Mammary epithelial cell (primary cell): ENCODE measurements at regions of chr12 and their contacts with region 1.

Region 1: DNA sequence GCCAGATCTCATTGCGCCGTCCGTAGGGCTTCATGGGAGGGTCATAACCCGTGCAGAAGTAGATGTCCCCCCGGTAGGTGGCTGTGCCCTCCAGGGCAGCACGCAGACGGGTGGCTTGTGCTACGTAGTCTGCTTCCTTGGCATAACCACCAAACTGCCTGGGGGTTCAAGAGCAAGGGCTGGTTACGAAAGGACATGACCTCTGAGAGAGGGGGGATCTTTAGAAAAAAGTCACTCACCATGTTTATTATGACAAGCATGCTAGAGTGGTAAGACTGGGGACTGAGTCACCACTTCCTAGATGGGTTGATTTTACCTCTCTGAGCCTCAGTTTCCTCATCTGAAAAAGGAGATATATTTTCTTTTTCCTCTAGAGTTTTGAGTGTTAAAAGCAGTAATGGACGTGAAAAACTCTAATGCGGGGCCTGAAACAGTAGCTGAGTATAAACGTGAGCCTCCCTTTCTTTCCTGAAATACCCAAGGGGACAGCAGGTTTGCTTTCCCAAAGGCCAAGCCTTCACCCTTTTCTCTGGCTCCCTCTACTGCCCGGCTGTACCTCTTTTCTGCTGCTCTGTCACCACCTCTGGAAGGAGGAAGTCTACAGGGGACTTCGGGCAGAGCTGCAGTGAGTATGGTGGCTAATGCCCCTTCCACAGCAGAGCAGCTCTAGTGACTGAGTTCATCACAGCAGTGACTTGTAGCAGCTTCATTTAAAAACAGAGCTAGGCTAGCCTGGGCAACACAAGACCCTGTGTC is 23.5 kb upstream of the GPRC5D start:
- DNase-seq: peak; percentile 27
- H3K4me3 ChIP-seq: no peak overlapping the region
- H3K27ac ChIP-seq: peak overlapping the region; percentile 41
- H3K4me1 ChIP-seq: peaks cover 24% of the 10 kb centered on the region
- H3K27me3 ChIP-seq: no peaks in the 10 kb centered on the region
- CTCF ChIP-seq: peak; percentile 38 to 61

Region 2: DNA sequence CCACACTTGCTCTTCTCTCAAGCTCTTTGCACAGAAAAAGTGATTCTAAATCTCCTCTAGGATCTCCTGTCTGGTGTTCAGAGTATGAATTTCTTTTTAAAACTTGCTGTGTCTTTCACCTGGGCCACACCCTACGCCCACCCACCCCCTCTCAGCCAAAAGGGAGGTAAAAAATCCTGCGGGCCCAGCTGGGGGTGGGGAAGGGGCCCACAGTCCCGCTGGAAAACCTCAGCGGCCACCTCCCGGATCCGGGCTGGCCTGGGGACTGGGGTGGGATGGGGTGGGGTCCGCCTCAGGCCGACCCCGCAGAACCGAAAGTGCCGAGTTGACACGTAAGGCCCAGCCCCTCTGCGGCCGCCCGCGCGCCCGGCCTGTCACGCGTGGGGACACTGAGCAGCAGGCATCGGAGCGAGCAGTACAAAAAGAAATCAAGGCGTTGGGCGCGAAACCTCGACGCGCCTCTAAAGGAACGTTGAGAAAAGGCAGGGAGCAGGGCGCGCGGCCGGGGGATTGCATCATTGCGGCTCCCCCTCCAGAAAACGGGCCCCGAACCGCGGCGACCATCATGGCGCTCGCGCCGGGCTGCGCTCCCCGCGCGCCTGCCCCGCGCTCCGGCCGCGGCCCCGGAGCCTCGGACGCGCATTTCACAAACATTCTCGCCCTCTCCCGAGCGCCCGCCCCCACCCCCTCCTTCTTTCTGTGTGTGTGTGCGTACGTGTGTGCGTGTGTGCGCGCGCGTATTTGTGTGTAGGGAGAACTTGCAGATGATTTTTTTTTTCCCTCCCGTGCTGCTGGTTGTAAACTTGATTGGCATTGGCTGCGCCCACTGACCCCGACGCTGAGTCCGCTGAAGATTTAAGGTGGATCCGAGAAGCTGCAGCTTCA is 250.6 kb before region 1 on chr12:
- CTCF ChIA-PET with region 1: no interaction called
- dilution Hi-C with region 1: no loop called
- in situ Hi-C with region 1: no loop called
- intact Hi-C with region 1: loop called (anchors 5 kb)
- DNase-seq: peak; percentile 97
- H3K4me3 ChIP-seq: peak overlapping the region; percentile 86 to 95 (median 93)
- H3K27ac ChIP-seq: peak overlapping the region; percentile 94
- H3K4me1 ChIP-seq: peaks cover 34% of the 10 kb centered on the region
- H3K27me3 ChIP-seq: no peaks in the 10 kb centered on the region
- CTCF ChIP-seq: no peak

Region 3: DNA sequence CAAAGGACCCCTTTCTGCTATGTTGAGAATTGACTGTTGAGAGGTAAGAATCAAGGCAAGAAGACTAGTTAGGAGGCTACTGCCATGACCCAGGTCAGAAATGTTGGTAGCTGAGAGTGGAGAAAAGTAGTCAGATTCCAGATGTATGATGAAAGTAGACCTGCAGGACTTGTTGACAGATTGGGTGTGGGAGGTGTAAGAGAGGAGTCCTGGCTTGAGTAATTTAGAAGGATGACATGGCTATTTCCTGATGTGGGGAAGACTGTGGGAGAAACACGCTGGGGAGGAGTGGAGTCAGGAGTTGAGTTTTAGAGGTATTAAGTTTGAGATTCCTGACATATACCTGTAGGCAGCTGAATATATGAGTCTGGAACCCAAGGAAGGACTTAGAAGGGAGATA is 175.1 kb before region 1 on chr12:
- CTCF ChIA-PET with region 1: no interaction called
- dilution Hi-C with region 1: no loop called
- in situ Hi-C with region 1: no loop called
- intact Hi-C with region 1: no loop called
- DNase-seq: peak; percentile 83
- H3K4me3 ChIP-seq: no peak overlapping the region
- H3K27ac ChIP-seq: peak overlapping the region; percentile 61
- H3K4me1 ChIP-seq: peaks cover 30% of the 10 kb centered on the region
- H3K27me3 ChIP-seq: no peaks in the 10 kb centered on the region
- CTCF ChIP-seq: no peak

Region 4: GRCh38 chr12:12999959-13000615 is 24.6 kb after region 1 on chr12 and contains the start of gene HEBP1:
- CTCF ChIA-PET with region 1: no interaction called
- dilution Hi-C with region 1: no loop called
- in situ Hi-C with region 1: no loop called
- intact Hi-C with region 1: loop called (anchors 2 kb)
- DNase-seq: peak; percentile 86
- H3K4me3 ChIP-seq: peak within 1 kb of the TSS; percentile 81 to 94 (median 82)
- H3K27ac ChIP-seq: peak within 1 kb of the TSS; percentile 72
- H3K4me1 ChIP-seq: peaks cover 19% of the 10 kb centered on the region
- H3K27me3 ChIP-seq: no peaks in the 10 kb centered on the region
- CTCF ChIP-seq: no peak
- total RNA-seq, gene HEBP1: 13.5 to 36.5 TPM